Naive thymus-derived CD4-positive, alpha-beta T cell (primary cell): ENCODE measurements at regions of chr1 and their contacts with region 1.

Region 1: DNA sequence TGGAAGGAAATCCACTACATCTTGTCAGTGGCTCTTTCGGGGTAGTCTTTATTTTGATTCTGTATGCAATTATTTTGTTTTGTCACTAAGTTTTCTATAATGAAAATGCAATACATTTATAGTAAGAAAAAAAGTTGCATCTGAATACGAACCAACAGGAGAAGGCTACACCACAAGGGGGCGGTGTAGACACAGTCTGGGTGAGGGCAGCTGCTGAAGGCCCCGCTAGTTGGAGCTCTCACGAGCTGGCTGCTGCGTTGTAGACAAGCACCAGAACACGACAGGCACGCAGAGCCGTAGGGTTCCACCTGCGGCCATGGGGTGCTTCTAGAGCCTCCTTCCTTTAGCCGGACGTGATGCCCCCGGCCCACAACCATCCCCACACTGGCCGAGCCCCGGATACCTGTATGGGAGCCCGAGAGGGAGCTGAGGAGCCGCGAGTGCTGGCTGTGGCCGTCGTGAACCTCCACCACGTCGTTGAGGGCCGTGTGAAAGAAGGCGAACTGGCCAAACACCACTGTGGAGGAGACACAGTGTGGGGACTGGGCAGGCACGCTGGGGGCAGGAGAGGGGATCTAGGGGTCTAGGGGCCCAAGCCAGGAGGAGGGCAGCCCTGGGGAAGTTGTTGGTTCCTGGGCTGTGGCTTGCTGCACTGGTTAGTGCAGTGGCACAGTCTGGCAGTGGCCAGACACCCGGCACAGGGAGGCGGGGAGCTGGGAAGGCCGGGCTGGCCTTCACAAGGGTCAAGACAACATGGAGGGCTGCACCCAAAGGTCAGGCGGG is 160.8 kb downstream of the ZSCAN20 start:
- DNase-seq: peak; percentile 48 to 81 (median 72)
- ATAC-seq: peak; percentile 94
- H3K4me3 ChIP-seq: no peak overlapping the region
- H3K4me3 Mint-ChIP-seq: peak overlapping the region in 6 of 10 donors; percentile 4 to 56 (median 44)
- H3K27ac ChIP-seq: no peak overlapping the region
- H3K27ac Mint-ChIP-seq: no peak overlapping the region
- H3K4me1 ChIP-seq: no peaks in the 10 kb centered on the region
- H3K4me1 Mint-ChIP-seq: peaks cover 0 to 6% (median 0%) of the 10 kb centered on the region in 7 donors
- H3K27me3 ChIP-seq: no peaks in the 10 kb centered on the region
- H3K27me3 Mint-ChIP-seq: peaks cover 23 to 51% (median 37%) of the 10 kb centered on the region in 5 donors

Region 2: DNA sequence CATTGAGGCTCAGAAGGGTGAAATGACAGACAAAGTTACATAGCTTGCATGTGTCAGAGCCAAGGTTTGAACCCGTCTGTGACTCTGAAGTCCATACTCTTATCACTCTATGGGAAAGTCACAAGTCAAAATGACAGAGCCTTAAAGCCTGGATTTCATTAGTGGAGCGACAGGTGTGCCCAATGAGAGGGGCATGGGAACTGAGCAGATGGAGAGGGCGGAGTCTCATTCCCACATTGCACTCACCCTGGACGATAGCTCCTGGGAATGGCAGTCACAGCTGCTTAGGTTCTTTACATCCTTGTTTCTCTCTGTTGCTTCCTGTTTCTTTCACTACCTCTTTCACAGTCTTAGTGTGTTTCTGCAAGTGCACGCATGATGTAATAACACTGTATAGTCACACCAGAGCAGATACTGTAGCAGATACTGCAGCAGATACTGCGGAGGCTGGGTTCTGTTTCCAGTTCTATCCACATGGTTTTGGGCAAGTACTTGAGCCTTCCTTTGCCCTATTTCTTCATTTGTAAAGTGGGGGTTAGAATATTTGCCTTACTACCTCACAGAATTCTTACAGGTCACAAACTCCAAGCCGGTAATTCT is 33.6 kb before region 1 on chr1:
- CTCF ChIA-PET with region 1: no interaction called
- POLR2A ChIA-PET with region 1: no interaction called
- intact Hi-C with region 1: no loop called
- DNase-seq: no peak
- ATAC-seq: no peak
- H3K4me3 ChIP-seq: no peak overlapping the region
- H3K4me3 Mint-ChIP-seq: no peak overlapping the region
- H3K27ac ChIP-seq: no peak overlapping the region
- H3K27ac Mint-ChIP-seq: no peak overlapping the region
- H3K4me1 ChIP-seq: no peaks in the 10 kb centered on the region
- H3K4me1 Mint-ChIP-seq: no peaks in the 10 kb centered on the region
- H3K27me3 ChIP-seq: no peaks in the 10 kb centered on the region
- H3K27me3 Mint-ChIP-seq: peaks cover 11 to 59% (median 43%) of the 10 kb centered on the region in 5 donors

Region 3: GRCh38 chr1:34013958-34014737 is 380.9 kb after region 1 on chr1:
- CTCF ChIA-PET with region 1: no interaction called
- POLR2A ChIA-PET with region 1: no interaction called
- intact Hi-C with region 1: loop called in 1 of 2 experiments (anchors 10 kb)
- DNase-seq: no peak
- ATAC-seq: no peak
- H3K4me3 ChIP-seq: no peak overlapping the region
- H3K4me3 Mint-ChIP-seq: no peak overlapping the region
- H3K27ac ChIP-seq: no peak overlapping the region
- H3K27ac Mint-ChIP-seq: no peak overlapping the region
- H3K4me1 ChIP-seq: no peaks in the 10 kb centered on the region
- H3K4me1 Mint-ChIP-seq: no peaks in the 10 kb centered on the region
- H3K27me3 ChIP-seq: no peaks in the 10 kb centered on the region
- H3K27me3 Mint-ChIP-seq: peaks cover 2 to 53% (median 18%) of the 10 kb centered on the region in 5 donors

Region 4: DNA sequence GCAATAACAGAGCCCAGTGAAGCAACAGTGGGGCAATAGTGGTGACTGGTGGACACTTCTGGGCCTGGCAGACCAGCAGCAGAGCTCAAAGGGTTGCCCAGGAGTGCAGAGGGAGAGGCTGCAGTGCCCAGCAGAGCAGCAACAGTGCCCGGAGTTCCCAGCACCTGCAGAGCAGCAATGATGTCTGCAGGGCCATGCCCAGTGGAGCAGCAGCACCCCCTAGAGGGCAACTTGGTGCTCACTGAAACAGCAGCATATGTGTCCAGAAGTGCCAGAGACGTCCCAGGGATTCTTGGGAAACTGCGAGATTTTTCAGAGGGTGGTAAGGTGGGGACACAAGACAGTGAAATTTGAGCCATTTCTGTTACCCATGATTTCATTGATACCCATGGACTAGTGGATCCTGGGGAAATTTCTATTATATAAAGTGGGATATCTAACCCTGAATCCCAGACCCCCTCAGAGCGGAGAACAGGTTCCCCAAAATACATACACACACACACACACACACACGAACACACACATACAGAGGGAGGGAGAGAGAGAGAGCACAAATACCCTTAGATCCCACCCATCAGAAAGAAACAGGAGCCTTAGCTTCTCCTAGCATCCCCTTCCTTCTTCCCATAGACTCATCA is 964.8 kb after region 1 on chr1:
- CTCF ChIA-PET with region 1: no interaction called
- POLR2A ChIA-PET with region 1: no interaction called
- intact Hi-C with region 1: loop called in 1 of 2 experiments (anchors 5 kb)
- DNase-seq: peak in 3 of 9 donors; percentile 4 to 67 (median 15)
- ATAC-seq: no peak
- H3K4me3 ChIP-seq: no peak overlapping the region
- H3K4me3 Mint-ChIP-seq: no peak overlapping the region
- H3K27ac ChIP-seq: no peak overlapping the region
- H3K27ac Mint-ChIP-seq: no peak overlapping the region
- H3K4me1 ChIP-seq: no peaks in the 10 kb centered on the region
- H3K4me1 Mint-ChIP-seq: no peaks in the 10 kb centered on the region
- H3K27me3 ChIP-seq: no peaks in the 10 kb centered on the region
- H3K27me3 Mint-ChIP-seq: peaks cover 3 to 37% (median 14%) of the 10 kb centered on the region in 5 donors

Region 5: DNA sequence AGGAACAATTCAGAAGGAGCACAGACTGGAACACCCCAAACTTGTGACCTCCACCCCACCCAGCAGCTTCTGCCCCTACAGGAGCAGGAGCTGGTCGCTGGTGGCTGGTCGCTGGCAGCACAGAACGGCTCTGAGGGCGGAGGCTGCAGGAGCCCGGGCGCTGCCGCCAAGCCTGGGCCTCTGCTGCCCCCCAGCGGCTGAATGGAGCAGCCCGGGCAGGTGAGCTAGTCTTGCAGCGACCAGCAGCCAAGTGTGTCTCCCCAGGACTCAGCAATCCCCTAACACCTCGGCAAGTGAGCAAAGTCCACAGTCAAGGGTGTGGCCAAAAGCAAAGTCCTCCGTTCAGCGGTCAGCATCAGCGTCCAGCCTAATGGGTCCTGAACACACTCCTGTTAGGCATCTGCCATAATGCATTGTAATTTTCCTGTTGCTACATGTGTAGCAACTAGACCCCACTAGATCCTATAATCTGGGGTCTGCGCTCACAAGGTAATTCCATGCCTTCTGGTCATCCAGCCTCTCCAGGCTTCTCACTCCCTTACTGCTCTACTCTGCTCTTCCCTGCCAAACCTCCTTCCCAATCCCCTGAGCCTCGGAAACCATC is 1109.6 kb after region 1 on chr1:
- CTCF ChIA-PET with region 1: interaction called, 11 read pairs
- POLR2A ChIA-PET with region 1: no interaction called
- intact Hi-C with region 1: loop called (anchors 1 to 5 kb)
- DNase-seq: peak; percentile 35 to 87 (median 66)
- ATAC-seq: peak; percentile 80
- H3K4me3 ChIP-seq: no peak overlapping the region
- H3K4me3 Mint-ChIP-seq: no peak overlapping the region
- H3K27ac ChIP-seq: no peak overlapping the region
- H3K27ac Mint-ChIP-seq: no peak overlapping the region
- H3K4me1 ChIP-seq: no peaks in the 10 kb centered on the region
- H3K4me1 Mint-ChIP-seq: peaks cover 0 to 6% (median 0%) of the 10 kb centered on the region in 7 donors
- H3K27me3 ChIP-seq: no peaks in the 10 kb centered on the region
- H3K27me3 Mint-ChIP-seq: peaks cover 0 to 7% (median 0%) of the 10 kb centered on the region in 5 donors